ENCODE measurements at regions of chr17 and their contacts with region 1.

Region 1: DNA sequence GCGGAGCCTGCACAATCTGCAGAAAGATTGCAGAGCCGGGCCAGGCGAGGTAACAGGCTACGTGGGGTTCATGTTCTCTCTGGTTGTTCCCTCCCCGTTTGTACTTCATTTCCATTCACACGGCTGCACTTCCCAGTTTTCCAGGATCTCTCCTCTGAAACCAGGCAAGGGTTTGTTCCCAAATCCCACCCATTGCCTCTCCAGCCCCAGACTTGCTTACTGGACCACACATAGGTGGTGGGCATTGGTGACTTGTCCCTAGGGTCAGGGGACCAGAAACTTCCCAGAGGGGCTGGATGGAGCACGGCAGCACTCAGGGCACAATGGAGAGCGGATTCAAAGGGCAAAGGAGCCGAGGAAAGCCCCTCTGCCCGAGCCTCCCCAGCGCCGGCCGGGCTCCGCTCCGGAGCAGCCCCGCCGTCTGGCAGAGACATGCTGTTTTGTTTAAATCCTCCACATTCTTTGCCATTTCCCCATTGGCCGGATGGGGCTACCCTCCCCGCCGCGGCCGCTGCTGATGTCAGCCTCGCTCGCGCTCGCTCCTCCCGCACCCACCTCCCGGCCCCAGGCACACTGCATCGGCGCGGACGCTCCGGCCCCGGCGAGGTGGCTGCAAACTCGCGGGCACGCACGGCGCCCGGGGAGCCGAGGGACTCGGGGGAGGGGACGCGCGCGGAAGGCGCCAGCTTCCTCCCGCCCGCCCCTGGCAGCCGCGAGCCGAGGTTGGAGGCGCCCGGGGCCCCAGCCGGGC is at the start of gene PITPNC1:
- H3K4me3 ChIP-seq: peak within 1 kb of the TSS; percentile 85
- H3K27ac ChIP-seq: peak within 1 kb of the TSS; percentile 87
- H3K4me1 ChIP-seq: peaks cover 5% of the 10 kb centered on the region; the same call in 1 of the 2 replicates
- CTCF ChIP-seq: peak; percentile 58; the same call in 1 of the 2 replicates

Region 2: DNA sequence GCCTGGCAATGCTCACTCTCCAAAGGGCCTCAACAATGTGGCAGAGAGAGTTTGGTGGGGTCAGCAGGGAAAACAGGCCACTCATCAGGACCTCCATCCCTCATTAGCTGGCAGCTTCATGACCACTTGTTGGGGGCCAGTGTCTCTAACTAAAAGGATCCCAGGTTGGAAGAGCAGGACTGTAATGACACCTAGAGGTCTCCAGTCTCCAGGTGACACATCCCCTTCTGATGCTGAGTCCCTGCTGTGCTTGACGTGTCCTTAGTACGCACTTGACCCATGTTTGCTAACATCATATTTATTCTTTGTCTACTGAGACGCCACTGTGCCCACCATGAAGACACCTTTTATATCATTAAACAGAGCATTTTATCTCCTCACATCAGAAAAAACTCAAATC is 508.5 kb before region 1 on chr17:
- CTCF ChIA-PET with region 1: no interaction called
- POLR2A ChIA-PET with region 1: no interaction called
- H3K4me3 ChIP-seq: no peak overlapping the region
- H3K27ac ChIP-seq: no peak overlapping the region
- H3K4me1 ChIP-seq: no peaks in the 10 kb centered on the region
- CTCF ChIP-seq: no peak

Region 3: GRCh38 chr17:67132346-67132745 is 244.6 kb before region 1 on chr17:
- CTCF ChIA-PET with region 1: no interaction called
- POLR2A ChIA-PET with region 1: no interaction called
- H3K4me3 ChIP-seq: no peak overlapping the region
- H3K27ac ChIP-seq: no peak overlapping the region
- H3K4me1 ChIP-seq: peaks cover 13% of the 10 kb centered on the region; the same call in 1 of the 2 replicates
- CTCF ChIP-seq: no peak

Region 4: DNA sequence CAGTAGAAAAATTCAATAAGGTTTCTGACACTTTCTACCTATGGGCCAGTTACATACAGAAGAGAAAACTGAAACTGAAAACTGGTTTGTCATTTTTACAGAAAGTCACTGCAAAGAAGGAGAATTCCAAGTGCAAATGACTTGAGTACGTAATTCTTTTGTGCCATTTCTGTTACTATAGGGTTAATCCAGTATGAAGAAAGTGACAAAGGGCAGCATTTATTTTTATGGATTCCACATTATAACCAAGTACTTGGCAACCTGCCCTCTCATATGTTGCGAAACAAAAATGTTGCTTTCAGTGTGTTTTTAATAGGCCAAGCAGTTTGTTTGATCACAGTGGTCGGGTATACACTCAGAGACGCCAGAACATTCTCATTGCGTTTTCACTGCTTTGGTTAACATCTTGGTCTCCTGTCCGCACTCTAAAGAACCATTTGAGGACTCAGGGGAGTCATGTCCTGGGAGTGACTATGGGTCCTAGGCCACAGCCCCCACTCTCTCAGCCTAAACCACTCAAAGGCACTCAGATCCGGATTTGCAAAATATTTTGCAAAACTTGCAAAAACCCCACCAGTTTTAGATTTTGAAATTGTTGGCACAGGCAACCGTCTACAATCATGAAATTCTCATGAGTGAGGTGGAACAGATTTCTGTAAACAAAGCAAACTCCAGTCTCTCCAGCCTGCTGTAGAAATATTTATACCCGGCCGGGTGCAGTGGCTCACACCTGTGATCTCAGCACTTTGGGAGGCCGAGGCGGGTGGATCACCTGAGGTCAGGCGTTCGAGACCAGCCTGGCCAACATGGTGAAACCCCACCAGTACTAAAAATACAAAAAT is 116.5 kb before region 1 on chr17:
- CTCF ChIA-PET with region 1: no interaction called
- POLR2A ChIA-PET with region 1: no interaction called
- H3K4me3 ChIP-seq: no peak overlapping the region
- H3K27ac ChIP-seq: no peak overlapping the region
- H3K4me1 ChIP-seq: 0 out of 2 replicates have a peak, but pooled peaks cover 3% of the 10 kb centered on the region
- CTCF ChIP-seq: no peak

Region 5: DNA sequence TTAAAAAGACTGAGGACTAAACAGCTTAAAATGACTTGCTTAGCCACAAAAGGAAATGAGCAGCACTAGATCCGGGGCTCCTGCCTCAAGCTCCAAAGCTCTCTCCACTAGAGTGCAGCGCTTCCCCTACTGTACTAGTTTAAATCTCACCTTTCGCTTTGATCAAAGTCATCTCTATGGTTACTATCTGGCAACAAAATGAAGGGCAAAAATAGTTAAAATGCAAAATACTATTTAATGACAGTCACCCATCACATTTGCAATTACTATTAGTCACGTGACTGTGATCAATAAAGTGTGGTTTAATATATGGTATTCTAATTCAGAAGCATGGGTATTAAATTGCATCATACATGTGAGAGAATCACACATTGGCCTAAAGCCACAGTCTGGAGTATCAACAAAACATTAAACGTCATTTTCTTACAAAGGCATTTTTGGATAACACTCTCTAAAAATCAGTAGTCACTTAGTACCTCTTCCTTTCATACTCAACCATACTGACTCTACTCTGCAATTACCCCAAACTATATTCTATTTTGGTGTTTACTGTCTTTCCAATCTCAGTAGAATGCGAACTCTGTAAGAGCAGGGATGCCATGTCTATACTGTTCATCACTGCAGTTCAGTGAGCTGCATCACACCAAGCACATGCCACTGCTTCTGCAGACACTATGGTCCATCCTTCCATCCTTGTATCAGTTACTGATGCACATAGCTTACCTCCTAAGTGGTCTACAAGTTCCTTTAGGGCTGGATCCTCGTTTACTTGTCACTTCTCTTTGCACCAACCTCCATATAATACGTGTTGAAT is 16.7 kb before region 1 on chr17:
- CTCF ChIA-PET with region 1: interaction called, 11 read pairs
- POLR2A ChIA-PET with region 1: interaction called, 4 read pairs
- H3K4me3 ChIP-seq: no peak overlapping the region
- H3K27ac ChIP-seq: 0 out of 2 replicates have a peak overlapping the region, but pooled peaks have one; percentile 18
- H3K4me1 ChIP-seq: peaks cover 11% of the 10 kb centered on the region; the same call in 1 of the 2 replicates
- CTCF ChIP-seq: no peak

Region 6: GRCh38 chr17:67449845-67450755 is 73.2 kb after region 1 on chr17:
- CTCF ChIA-PET with region 1: no interaction called
- POLR2A ChIA-PET with region 1: no interaction called
- H3K4me3 ChIP-seq: no peak overlapping the region
- H3K27ac ChIP-seq: no peak overlapping the region
- H3K4me1 ChIP-seq: no peaks in the 10 kb centered on the region
- CTCF ChIP-seq: no peak

Region 7: GRCh38 chr17:67475236-67475937 is 98.5 kb after region 1 on chr17:
- CTCF ChIA-PET with region 1: interaction called, 25 read pairs
- POLR2A ChIA-PET with region 1: no interaction called
- H3K4me3 ChIP-seq: no peak overlapping the region
- H3K27ac ChIP-seq: no peak overlapping the region
- H3K4me1 ChIP-seq: no peaks in the 10 kb centered on the region; the same call in 1 of the 2 replicates
- CTCF ChIP-seq: peak; percentile 89

Region 8: GRCh38 chr17:67602956-67603355 is 226.0 kb after region 1 on chr17:
- CTCF ChIA-PET with region 1: interaction called, 20 read pairs
- POLR2A ChIA-PET with region 1: no interaction called
- H3K4me3 ChIP-seq: no peak overlapping the region
- H3K27ac ChIP-seq: no peak overlapping the region
- H3K4me1 ChIP-seq: peaks cover 13% of the 10 kb centered on the region
- CTCF ChIP-seq: no peak

Region 9: DNA sequence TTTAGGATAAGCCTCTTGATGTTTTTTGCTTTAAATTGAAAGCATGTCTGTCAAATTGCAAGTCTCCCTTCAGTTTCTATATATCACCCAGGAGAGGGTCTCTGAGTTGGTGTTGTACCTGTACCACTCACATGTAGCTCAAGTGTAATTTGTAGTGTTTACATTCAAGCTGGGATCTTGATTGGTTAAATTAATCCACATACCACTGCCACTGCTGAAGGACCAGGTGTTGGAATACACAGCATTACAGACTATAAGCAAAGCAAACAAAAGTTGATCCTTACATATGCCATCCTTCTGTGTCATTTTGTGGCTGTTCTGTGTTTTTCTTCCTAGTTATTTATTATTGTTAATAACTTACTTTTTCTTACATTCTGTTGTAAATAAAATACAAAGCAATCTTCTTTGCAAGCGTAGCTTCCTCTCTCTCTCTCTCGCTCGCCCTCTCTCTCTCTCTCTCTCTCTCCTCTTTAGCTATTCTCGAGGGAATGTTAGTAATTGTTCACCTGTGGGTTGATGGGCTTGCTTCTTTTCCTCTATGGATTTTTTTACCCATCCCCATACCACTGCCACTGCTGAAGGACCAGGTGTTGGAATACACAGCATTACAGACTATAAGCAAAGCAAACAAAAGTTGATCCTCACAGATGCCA is 320.1 kb after region 1 on chr17:
- CTCF ChIA-PET with region 1: interaction called, 32 read pairs
- POLR2A ChIA-PET with region 1: no interaction called
- H3K4me3 ChIP-seq: no peak overlapping the region
- H3K27ac ChIP-seq: no peak overlapping the region
- H3K4me1 ChIP-seq: no peaks in the 10 kb centered on the region
- CTCF ChIP-seq: no peak